Endothelial cell of umbilical vein (primary cell): ENCODE measurements at regions of chr18 and their contacts with region 1.

Region 1: DNA sequence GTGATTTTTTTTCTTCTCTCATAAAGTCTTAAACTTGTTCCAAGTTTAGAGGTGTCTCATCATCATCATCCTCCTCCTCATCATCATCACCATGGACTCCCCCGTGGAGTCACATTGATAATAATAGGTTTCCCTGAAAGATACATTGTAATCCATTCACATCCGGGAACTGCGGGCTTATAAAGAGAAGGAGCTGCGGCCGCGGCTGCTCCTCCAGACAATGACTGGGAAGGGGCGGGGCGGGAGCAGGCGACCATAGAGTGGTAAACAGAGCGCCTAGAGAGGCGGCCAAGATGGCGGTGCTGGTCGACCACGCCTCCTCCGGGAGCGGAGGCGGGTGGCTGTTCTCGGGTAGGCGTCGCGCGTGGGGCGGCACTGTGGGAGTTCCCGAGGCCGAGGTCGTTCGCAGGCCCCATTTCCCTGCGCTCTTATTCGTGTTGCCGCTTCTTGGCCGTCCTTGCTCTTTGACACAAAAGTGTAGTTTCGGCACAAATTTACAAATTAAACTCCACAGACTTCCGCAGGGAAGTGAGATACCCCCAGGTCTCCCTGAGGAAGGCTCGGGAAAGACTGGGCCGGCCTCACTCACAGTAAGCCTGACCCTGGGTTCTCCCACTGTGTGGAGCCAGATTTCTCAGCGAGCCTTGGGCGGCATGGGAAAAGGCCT is 1.8 kb upstream of the TCF4 start:
- DNase-seq: peak; percentile 97
- H3K4me3 ChIP-seq: peak overlapping the region; percentile 87 to 100 (median 98)
- H3K27ac ChIP-seq: peak overlapping the region; percentile 96
- H3K4me1 ChIP-seq: peaks cover 23% of the 10 kb centered on the region
- H3K27me3 ChIP-seq: no peaks in the 10 kb centered on the region
- CTCF ChIP-seq: no peak
- POLR2A ChIP-seq: peak; percentile 81

Region 2: GRCh38 chr18:55265984-55266383 is 323.8 kb before region 1 on chr18:
- CTCF ChIA-PET with region 1: no interaction called
- POLR2A ChIA-PET with region 1: no interaction called
- dilution Hi-C with region 1: no loop called
- intact Hi-C with region 1: loop called (anchors 2 kb)
- DNase-seq: peak; percentile 75
- H3K4me3 ChIP-seq: no peak overlapping the region
- H3K27ac ChIP-seq: peak overlapping the region; percentile 73
- H3K4me1 ChIP-seq: peaks cover 67% of the 10 kb centered on the region
- H3K27me3 ChIP-seq: no peaks in the 10 kb centered on the region
- CTCF ChIP-seq: no peak
- POLR2A ChIP-seq: peak; percentile 30

Region 3: GRCh38 chr18:55384551-55385275 is 205.0 kb before region 1 on chr18:
- CTCF ChIA-PET with region 1: interaction called, 6 read pairs
- POLR2A ChIA-PET with region 1: no interaction called
- dilution Hi-C with region 1: no loop called
- intact Hi-C with region 1: loop called (anchors 2 kb)
- DNase-seq: peak; percentile 67
- H3K4me3 ChIP-seq: no peak overlapping the region
- H3K27ac ChIP-seq: no peak overlapping the region
- H3K4me1 ChIP-seq: peaks cover 39% of the 10 kb centered on the region
- H3K27me3 ChIP-seq: no peaks in the 10 kb centered on the region
- CTCF ChIP-seq: peak; percentile 69 to 74
- POLR2A ChIP-seq: no peak

Region 4: DNA sequence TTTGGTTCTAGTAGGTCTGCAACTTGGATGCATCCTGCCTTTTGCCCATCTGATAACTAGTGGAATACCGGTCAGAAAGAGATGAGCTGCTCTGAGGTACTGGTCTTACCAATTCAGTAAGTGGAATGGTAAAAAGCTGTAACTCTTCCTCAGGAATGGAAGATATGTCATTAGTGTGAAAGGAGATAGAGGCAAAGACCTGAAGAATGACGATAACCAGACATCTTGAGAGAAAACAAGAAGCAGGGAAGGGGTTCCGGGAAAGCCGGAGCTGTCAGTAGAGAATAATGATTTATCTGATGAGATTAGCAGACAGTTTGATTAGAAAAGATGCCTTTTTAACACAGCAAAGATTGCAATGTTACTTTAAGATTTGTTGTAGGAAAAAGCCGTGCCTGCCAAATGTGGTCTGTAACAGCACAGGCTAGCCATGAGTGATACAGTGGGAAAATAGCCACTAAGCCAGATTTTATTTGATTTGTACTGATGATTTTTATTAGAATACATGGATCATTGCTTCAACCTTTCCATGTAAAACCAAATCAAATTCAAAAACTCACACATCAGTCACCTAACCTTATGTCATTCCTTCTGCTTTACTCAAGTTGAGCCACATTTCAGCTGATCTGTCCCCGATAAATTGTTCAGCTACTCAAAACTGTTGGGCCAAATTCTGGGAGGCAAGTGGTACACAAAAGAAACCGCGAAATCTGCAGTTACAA is 111.7 kb before region 1 on chr18:
- CTCF ChIA-PET with region 1: no interaction called
- POLR2A ChIA-PET with region 1: no interaction called
- dilution Hi-C with region 1: no loop called
- intact Hi-C with region 1: loop called (anchors 2 kb)
- DNase-seq: no peak
- H3K4me3 ChIP-seq: peak overlapping the region; percentile 31 to 91 (median 80)
- H3K27ac ChIP-seq: peak overlapping the region; percentile 95
- H3K4me1 ChIP-seq: peaks cover 35% of the 10 kb centered on the region
- H3K27me3 ChIP-seq: no peaks in the 10 kb centered on the region
- CTCF ChIP-seq: no peak
- POLR2A ChIP-seq: no peak

Region 5: GRCh38 chr18:55625901-55626300 is 36.1 kb after region 1 on chr18:
- CTCF ChIA-PET with region 1: no interaction called
- POLR2A ChIA-PET with region 1: no interaction called
- dilution Hi-C with region 1: no loop called
- intact Hi-C with region 1: no loop called
- DNase-seq: no peak
- H3K4me3 ChIP-seq: no peak overlapping the region
- H3K27ac ChIP-seq: no peak overlapping the region
- H3K4me1 ChIP-seq: no peaks in the 10 kb centered on the region
- H3K27me3 ChIP-seq: no peaks in the 10 kb centered on the region
- CTCF ChIP-seq: no peak
- POLR2A ChIP-seq: no peak

Region 6: DNA sequence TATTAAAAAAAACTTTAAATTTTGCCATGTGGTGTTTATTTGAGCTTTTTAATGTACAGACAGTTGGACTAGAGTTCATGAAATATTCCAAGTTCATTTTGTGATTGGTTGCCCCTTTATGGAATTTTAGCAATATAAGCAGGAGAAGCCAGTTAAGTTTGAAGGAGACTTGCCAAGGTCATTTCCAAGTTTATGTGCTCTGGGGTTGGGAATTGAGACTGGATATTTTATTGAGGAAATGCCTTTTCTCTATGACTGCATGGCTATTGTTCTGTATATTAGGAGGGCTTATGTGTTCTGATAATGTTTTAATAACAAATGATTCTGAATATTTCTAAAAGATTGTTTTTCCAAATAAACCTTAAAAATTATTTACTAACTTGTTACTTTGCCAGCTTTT is 65.2 kb after region 1 on chr18:
- CTCF ChIA-PET with region 1: no interaction called
- POLR2A ChIA-PET with region 1: no interaction called
- dilution Hi-C with region 1: no loop called
- intact Hi-C with region 1: no loop called
- DNase-seq: peak; percentile 76
- H3K4me3 ChIP-seq: no peak overlapping the region
- H3K27ac ChIP-seq: no peak overlapping the region
- H3K4me1 ChIP-seq: no peaks in the 10 kb centered on the region
- H3K27me3 ChIP-seq: peaks cover 0 to 3% of the 10 kb centered on the region in 2 experiments
- CTCF ChIP-seq: no peak
- POLR2A ChIP-seq: no peak

Region 7: GRCh38 chr18:56083097-56083521 is 493.4 kb after region 1 on chr18:
- CTCF ChIA-PET with region 1: no interaction called
- POLR2A ChIA-PET with region 1: no interaction called
- dilution Hi-C with region 1: no loop called
- intact Hi-C with region 1: loop called (anchors 1 kb)
- DNase-seq: peak; percentile 99
- H3K4me3 ChIP-seq: no peak overlapping the region
- H3K27ac ChIP-seq: peak overlapping the region; percentile 95
- H3K4me1 ChIP-seq: peaks cover 26% of the 10 kb centered on the region
- H3K27me3 ChIP-seq: no peaks in the 10 kb centered on the region
- CTCF ChIP-seq: peak; percentile 24 to 46
- POLR2A ChIP-seq: peak; percentile 71

Region 8: DNA sequence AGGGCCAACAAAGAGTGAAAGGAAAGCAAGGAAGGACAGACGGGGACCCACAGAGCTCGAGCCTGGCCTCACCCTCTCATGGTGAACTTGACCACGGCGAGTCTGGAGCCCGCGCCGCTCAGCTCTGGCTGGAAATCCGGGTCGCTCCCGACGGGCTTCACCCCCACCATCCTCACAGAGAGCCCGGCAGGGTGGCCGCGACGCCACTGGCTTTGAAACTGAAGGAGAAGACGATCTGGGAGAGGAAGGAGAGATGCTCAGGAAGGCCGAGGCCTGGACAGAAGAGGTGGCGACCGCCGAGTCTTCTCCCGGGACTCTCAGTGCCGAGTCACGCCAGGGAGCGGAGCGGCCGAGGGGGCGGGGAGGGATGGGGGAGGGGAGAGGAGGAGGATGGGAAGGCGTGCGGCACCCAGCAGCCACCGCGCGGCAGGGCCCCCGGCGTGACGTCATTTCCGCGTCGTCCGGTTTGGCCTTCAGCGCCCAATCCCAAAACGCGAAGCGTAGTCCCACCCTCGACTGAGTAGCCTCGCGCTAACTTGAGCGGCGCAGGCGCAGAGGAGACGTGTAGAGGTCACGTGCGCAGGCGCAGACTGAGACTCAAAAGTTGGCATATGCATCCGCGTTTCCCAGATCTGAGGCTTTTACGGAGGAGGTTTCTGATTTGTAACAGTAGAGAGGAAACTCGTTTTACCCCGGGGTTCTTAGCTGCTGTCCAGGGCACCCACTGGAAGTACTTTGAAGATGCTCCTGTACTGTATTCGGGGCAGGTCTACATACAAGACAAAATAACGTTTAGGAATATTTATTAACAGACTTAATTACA is 1048.7 kb after region 1 on chr18 and contains the start of gene TXNL1:
- CTCF ChIA-PET with region 1: no interaction called
- POLR2A ChIA-PET with region 1: no interaction called
- dilution Hi-C with region 1: no loop called
- intact Hi-C with region 1: loop called (anchors 1 kb)
- DNase-seq: peak; percentile 99
- H3K4me3 ChIP-seq: peak within 1 kb of the TSS; percentile 89 to 92 (median 91)
- H3K27ac ChIP-seq: peak within 1 kb of the TSS; percentile 97
- H3K4me1 ChIP-seq: peaks cover 27% of the 10 kb centered on the region
- H3K27me3 ChIP-seq: no peaks in the 10 kb centered on the region
- CTCF ChIP-seq: no peak
- POLR2A ChIP-seq: peak; percentile 93
- total RNA-seq, gene TXNL1: 70.6 and 81.2 TPM in 2 replicates